ENCODE measurements at regions of chr16 and their contacts with region 1.

Region 1: DNA sequence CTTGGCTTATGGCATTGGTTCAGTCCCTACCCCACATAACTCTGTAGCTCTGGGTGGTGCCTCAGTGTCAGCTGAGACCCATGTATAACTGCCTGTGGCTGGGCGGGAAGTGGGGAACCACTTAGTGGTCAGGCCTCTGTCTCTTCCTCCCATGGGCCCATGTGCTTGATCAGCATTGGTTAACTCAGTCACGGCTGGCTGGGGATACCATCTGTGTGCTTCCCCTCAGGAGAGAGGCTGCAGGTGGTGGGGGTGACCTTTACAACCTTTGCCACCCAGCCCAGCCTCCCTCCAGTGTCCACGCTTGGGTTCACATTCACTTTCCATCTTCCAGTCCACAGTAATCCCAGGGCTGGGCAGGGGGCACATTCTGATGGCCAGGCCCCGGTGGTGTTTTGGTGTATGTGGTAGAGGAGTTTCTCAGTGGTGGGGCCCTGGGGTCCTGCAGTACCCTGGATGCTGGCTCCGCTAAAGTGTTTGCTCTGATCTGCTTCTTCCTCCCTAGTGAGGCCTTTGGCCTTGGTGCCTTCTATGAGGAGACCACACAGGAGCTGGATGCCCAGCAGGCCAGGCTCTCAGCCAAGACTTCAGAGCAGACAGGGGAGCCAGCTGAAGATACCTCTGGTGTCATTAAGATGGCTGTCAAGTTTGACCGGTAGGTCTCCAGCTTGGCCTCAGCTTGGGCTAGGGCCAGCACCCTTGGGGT is 10.2 kb upstream of the NFATC3 start:
- DNase-seq: no peak
- H3K4me3 ChIP-seq: no peak overlapping the region
- H3K27ac ChIP-seq: no peak overlapping the region
- H3K4me1 ChIP-seq: peaks cover 17% of the 10 kb centered on the region
- H3K27me3 ChIP-seq: no peaks in the 10 kb centered on the region
- CTCF ChIP-seq: no peak

Region 2: GRCh38 chr16:68022704-68023522 is 52.1 kb before region 1 on chr16 and contains the starts of genes DDX28 and DUS2:
- CTCF ChIA-PET with region 1: no interaction called
- dilution Hi-C with region 1: loop called (anchors 5 kb)
- in situ Hi-C with region 1: no loop called
- intact Hi-C with region 1: no loop called
- DNase-seq: peak; percentile 93
- H3K4me3 ChIP-seq: peak within 1 kb of the TSS; percentile 95 to 98 (median 97)
- H3K27ac ChIP-seq: peak within 1 kb of the TSS; percentile 84
- H3K4me1 ChIP-seq: peaks cover 12% of the 10 kb centered on the region
- H3K27me3 ChIP-seq: no peaks in the 10 kb centered on the region
- CTCF ChIP-seq: peak in 1 of 2 donors; percentile 6
- total RNA-seq, gene DDX28: 9.7 to 10.1 TPM
- total RNA-seq, gene DUS2: 16.5 to 22.9 TPM

Region 3: GRCh38 chr16:68105611-68106010 is 30.6 kb after region 1 on chr16:
- CTCF ChIA-PET with region 1: no interaction called
- dilution Hi-C with region 1: loop called (anchors 5 kb)
- in situ Hi-C with region 1: no loop called
- intact Hi-C with region 1: no loop called
- DNase-seq: no peak
- H3K4me3 ChIP-seq: no peak overlapping the region
- H3K27ac ChIP-seq: no peak overlapping the region
- H3K4me1 ChIP-seq: no peaks in the 10 kb centered on the region
- H3K27me3 ChIP-seq: no peaks in the 10 kb centered on the region
- CTCF ChIP-seq: no peak

Region 4: DNA sequence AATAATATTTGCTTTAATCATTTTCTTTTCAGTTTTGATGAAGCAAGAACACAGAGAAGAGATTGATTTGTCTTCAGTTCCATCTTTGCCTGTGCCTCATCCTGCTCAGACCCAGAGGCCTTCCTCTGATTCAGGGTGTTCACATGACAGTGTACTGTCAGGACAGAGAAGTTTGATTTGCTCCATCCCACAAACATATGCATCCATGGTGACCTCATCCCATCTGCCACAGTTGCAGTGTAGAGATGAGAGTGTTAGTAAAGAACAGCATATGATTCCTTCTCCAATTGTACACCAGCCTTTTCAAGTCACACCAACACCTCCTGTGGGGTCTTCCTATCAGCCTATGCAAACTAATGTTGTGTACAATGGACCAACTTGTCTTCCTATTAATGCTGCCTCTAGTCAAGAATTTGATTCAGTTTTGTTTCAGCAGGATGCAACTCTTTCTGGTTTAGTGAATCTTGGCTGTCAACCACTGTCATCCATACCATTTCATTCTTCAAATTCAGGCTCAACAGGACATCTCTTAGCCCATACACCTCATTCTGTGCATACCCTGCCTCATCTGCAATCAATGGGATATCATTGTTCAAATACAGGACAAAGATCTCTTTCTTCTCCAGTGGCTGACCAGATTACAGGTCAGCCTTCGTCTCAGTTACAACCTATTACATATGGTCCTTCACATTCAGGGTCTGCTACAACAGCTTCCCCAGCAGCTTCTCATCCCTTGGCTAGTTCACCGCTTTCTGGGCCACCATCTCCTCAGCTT is 115.9 kb after region 1 on chr16:
- CTCF ChIA-PET with region 1: no interaction called
- dilution Hi-C with region 1: no loop called
- in situ Hi-C with region 1: no loop called
- intact Hi-C with region 1: no loop called
- DNase-seq: no peak
- H3K4me3 ChIP-seq: no peak overlapping the region
- H3K27ac ChIP-seq: no peak overlapping the region
- H3K4me1 ChIP-seq: no peaks in the 10 kb centered on the region
- H3K27me3 ChIP-seq: no peaks in the 10 kb centered on the region
- CTCF ChIP-seq: no peak

Region 5: GRCh38 chr16:68229431-68230198 is 154.6 kb after region 1 on chr16:
- CTCF ChIA-PET with region 1: no interaction called
- dilution Hi-C with region 1: loop called (anchors 10 kb)
- in situ Hi-C with region 1: loop called in 1 of 2 experiments (anchors 10 kb)
- intact Hi-C with region 1: no loop called
- DNase-seq: peak; percentile 23
- H3K4me3 ChIP-seq: no peak overlapping the region
- H3K27ac ChIP-seq: no peak overlapping the region
- H3K4me1 ChIP-seq: peaks cover 15% of the 10 kb centered on the region
- H3K27me3 ChIP-seq: no peaks in the 10 kb centered on the region
- CTCF ChIP-seq: peak; percentile 80 to 88

Measured in mammary epithelial cell (primary cell).